K562 (cell line): ENCODE measurements at regions of chr5 and their contacts with region 1.

Region 1: GRCh38 chr5:134833340-134834032 is 12.3 kb upstream of the C5orf24 start:
- DNase-seq: no peak
- ATAC-seq: no peak
- H3K4me3 ChIP-seq: no peak overlapping the region
- H3K27ac ChIP-seq: no peak overlapping the region
- H3K4me1 ChIP-seq: no peaks in the 10 kb centered on the region
- H3K27me3 ChIP-seq: no peaks in the 10 kb centered on the region
- CTCF ChIP-seq: no peak
- EP300 ChIP-seq: no peak
- POLR2A ChIP-seq: no peak
- RAD21 ChIP-seq: no peak

Region 2: DNA sequence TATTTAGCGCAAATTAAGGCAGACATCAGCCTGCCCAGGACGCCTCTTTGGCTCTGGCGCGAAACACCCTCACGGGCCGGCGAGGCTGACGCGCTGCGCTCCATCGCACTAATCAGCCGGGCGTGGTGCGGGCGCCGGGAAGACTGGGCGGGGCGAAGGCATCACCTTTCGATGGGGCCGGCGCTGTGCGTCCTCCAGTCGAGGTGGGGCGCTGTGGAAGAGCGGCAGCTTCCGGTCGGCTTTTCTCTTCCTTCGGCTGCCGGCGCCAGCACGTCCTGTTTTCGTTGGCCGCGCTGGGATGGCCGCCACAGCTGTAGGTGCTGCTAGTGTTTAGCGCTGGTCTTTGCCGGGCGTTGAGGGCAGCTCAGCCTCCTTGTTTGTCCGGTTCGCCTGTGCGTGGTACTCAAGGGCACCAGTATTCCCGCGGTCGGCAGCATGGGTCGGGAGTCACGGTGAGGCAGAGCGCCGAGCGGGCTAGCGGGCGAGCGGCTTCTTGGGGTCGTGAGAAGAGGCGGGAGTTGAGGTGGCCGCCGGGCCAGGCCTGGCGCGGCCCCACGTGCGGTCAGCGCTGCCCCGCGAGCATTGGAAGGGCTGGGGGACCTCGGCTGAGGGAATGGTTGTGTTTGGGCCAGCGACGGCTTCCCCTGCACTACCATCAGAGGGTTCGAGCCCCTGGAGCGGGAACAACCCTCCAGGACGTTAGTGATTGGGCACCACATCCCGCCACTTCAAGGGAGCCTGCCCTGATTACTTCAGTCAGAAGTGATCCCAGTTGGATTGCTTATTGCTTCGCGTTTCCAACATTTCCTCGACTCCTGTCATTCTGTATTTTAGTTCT is 74.8 kb before region 1 on chr5 and contains the start of gene DDX46:
- CTCF ChIA-PET with region 1: no interaction called
- POLR2A ChIA-PET with region 1: no interaction called
- in situ Hi-C with region 1: no loop called
- intact Hi-C with region 1: no loop called
- DNase-seq: peak; percentile 93 to 97 (median 94)
- ATAC-seq: peak; percentile 98
- H3K4me3 ChIP-seq: peak within 1 kb of the TSS; percentile 80
- H3K27ac ChIP-seq: peak within 1 kb of the TSS; percentile 81
- H3K4me1 ChIP-seq: peaks cover 6 to 15% of the 10 kb centered on the region in 2 experiments; a peak in 4 of 5 replicates
- H3K27me3 ChIP-seq: no peaks in the 10 kb centered on the region
- CTCF ChIP-seq: peak; percentile 92 to 93 (median 92)
- EP300 ChIP-seq: 0 out of 2 replicates have a peak, but pooled peaks have one; percentile 26
- POLR2A ChIP-seq: peak; percentile 96
- RAD21 ChIP-seq: 0 out of 4 replicates have a peak, but pooled peaks of 1 of the 2 experiments have one; percentile 7
- polyA plus RNA-seq, gene DDX46: 26.2 to 32.3 TPM

Region 3: GRCh38 chr5:134845852-134846640 is 12.6 kb after region 1 on chr5 and contains the start of gene C5orf24:
- CTCF ChIA-PET with region 1: no interaction called
- POLR2A ChIA-PET with region 1: interaction called, 11 read pairs
- in situ Hi-C with region 1: no loop called
- intact Hi-C with region 1: no loop called
- DNase-seq: peak; percentile 90 to 97 (median 91)
- ATAC-seq: peak; percentile 93
- H3K4me3 ChIP-seq: peak within 1 kb of the TSS; percentile 93
- H3K27ac ChIP-seq: peak within 1 kb of the TSS; percentile 96
- H3K4me1 ChIP-seq: peaks cover 16 to 34% of the 10 kb centered on the region in 2 experiments; a peak in 4 of 5 replicates
- H3K27me3 ChIP-seq: no peaks in the 10 kb centered on the region
- CTCF ChIP-seq: no peak
- EP300 ChIP-seq: no peak
- POLR2A ChIP-seq: peak; percentile 95
- RAD21 ChIP-seq: no peak
- polyA plus RNA-seq, gene C5orf24: 8.9 to 10.6 TPM

Region 4: DNA sequence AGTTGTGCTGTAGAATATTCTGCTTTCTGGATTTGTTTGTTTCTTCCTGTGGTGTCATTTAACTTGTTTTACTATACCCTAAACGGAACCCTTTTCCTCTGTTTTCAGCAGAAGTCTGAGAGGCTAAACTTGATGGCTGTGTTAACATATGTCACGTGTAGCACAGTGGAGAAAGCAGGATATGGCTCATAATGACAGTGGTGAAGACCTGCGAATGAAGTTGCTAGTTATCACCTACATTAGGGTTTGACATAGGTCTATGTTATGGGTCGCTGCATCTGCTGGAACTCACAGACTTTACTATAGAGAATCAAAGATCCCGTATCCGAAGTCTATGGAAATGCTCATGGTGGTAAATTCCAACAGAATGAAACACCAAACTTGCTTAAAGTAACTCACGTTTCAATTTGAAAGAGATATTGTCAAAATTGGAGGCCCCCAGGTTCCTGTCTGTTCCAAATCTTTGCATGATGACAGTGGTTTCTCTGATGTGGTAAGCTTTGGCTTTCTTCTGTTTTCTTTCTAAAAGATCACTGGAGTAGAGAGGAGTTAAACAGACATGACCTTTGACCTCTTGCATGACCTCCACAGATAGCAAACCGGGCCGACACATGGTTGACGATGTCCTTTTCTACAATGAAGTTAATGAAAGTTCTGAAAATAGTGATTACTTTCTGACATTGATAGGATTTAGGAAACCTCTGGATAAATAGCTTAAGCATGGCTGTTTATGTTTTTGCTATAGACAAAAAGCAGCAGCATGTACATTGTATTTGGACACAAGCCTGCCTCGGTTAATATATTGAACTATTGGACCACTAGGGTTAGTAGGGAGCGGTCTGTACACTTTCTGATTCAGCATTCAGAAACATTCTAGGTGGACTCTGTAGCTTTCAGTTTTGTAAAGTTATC is 131.1 kb after region 1 on chr5:
- CTCF ChIA-PET with region 1: no interaction called
- POLR2A ChIA-PET with region 1: no interaction called
- in situ Hi-C with region 1: no loop called
- intact Hi-C with region 1: no loop called
- DNase-seq: no peak
- ATAC-seq: no peak
- H3K4me3 ChIP-seq: no peak overlapping the region
- H3K27ac ChIP-seq: no peak overlapping the region
- H3K4me1 ChIP-seq: no peaks in the 10 kb centered on the region
- H3K27me3 ChIP-seq: no peaks in the 10 kb centered on the region
- CTCF ChIP-seq: no peak
- EP300 ChIP-seq: no peak
- POLR2A ChIP-seq: no peak
- RAD21 ChIP-seq: no peak